Dendritic cell treated with granulocyte-macrophage colony-stimulating factor and Interleukin-4, amounts not matched to agents 40 ng/mL and 50 ng/mL, for 4 days (primary cell): ENCODE measurements at regions of chr20 and their contacts with region 1.

Region 1: DNA sequence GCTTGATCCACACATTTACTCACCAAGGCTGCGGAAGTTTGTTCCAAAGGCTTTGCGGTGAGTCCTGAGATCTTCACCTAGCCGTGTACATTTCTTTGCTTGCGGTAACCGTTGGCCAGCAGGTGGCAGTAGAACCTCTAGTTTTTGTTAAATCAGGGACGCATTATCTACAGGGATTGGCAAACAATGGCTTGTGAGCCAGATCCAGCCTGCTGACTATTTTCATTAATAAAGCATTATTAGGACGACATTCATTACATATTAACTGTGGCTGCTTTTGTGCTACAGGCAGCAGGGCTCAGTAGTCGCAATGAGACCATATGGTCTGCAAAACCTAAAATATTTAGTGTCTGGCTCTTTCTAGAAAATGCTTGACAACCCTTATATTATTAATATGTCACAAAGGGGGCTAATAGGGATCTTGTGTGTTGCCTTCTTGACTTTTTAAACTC is 174.1 kb downstream of the DOK5 start:
- H3K4me3 Mint-ChIP-seq: no peak overlapping the region
- H3K27ac Mint-ChIP-seq: no peak overlapping the region
- H3K4me1 Mint-ChIP-seq: no peaks in the 10 kb centered on the region
- H3K27me3 Mint-ChIP-seq: peaks cover 7% of the 10 kb centered on the region

Region 2: DNA sequence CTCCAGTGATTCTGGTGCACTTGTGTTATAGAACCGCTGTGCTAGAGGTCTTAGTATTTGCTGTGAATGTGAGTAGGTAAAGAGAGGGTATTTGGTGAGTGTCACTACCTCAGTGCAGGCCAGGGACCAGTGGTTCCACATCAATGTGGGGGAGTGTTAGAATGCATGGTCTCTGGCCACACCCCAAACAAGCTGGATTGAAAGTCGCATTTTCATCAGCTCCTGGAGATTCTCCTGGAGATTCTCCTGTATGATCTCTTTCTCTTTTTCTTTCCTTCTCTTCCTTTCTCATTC is 552.4 kb before region 1 on chr20:
- intact Hi-C with region 1: loop called (anchors 2 kb)
- H3K4me3 Mint-ChIP-seq: no peak overlapping the region
- H3K27ac Mint-ChIP-seq: no peak overlapping the region
- H3K4me1 Mint-ChIP-seq: peaks cover 11% of the 10 kb centered on the region
- H3K27me3 Mint-ChIP-seq: no peaks in the 10 kb centered on the region

Region 3: GRCh38 chr20:54219751-54220426 is 429.6 kb before region 1 on chr20:
- intact Hi-C with region 1: loop called (anchors 1 kb)
- H3K4me3 Mint-ChIP-seq: no peak overlapping the region
- H3K27ac Mint-ChIP-seq: no peak overlapping the region
- H3K4me1 Mint-ChIP-seq: peaks cover 24% of the 10 kb centered on the region
- H3K27me3 Mint-ChIP-seq: no peaks in the 10 kb centered on the region

Region 4: GRCh38 chr20:54475334-54476168 is 174.0 kb before region 1 on chr20 and contains the start of gene DOK5:
- intact Hi-C with region 1: loop called (anchors 5 kb)
- H3K4me3 Mint-ChIP-seq: peak within 1 kb of the TSS; percentile 10
- H3K27ac Mint-ChIP-seq: no peak within 1 kb of the TSS
- H3K4me1 Mint-ChIP-seq: peaks cover 9% of the 10 kb centered on the region
- H3K27me3 Mint-ChIP-seq: peaks cover 58% of the 10 kb centered on the region